ENCODE measurements at regions of chr16 and their contacts with region 1.

Region 1: GRCh38 chr16:58459344-58460218 is 40.4 kb upstream of the NDRG4 start:
- DNase-seq: peak; percentile 93
- H3K4me3 ChIP-seq: no peak overlapping the region
- H3K27ac ChIP-seq: no peak overlapping the region
- H3K4me1 ChIP-seq: peaks cover 15% of the 10 kb centered on the region
- H3K27me3 ChIP-seq: peaks cover 8% of the 10 kb centered on the region
- CTCF ChIP-seq: no peak

Region 2: DNA sequence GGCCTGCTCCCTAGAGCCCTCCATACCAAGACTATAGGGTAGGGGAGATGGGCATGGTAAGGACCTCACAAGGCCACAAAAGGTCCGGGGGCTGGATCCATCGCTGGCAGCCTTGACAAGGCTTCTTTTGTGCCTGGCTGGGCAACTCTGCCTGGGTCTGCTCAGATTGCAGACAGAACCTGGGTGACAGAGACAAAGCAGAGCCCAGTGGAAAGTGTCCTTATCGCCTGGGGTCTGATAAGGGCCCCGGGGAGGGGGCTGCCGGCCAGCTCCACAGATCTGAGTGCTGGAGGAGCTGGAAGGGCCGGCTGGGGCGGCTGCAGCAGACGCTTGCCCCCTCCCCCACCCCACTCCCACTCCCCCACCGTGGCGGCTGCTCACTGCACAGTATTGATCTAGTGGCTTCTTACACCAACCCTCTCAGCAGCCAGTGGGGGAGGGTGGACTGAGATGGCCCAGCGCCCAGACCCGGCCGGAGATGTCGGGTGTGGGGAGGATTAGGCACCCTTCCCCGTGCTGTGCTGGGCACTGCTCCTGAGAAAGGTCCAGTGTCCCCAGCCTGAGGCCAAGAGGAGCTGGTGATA is 426.8 kb before region 1 on chr16:
- CTCF ChIA-PET with region 1: no interaction called
- dilution Hi-C with region 1: loop called (anchors 10 kb)
- in situ Hi-C with region 1: no loop called
- intact Hi-C with region 1: no loop called
- DNase-seq: no peak
- H3K4me3 ChIP-seq: no peak overlapping the region
- H3K27ac ChIP-seq: no peak overlapping the region
- H3K4me1 ChIP-seq: no peaks in the 10 kb centered on the region
- H3K27me3 ChIP-seq: no peaks in the 10 kb centered on the region
- CTCF ChIP-seq: no peak

Region 3: GRCh38 chr16:58160855-58161254 is 298.7 kb before region 1 on chr16:
- CTCF ChIA-PET with region 1: no interaction called
- dilution Hi-C with region 1: loop called (anchors 10 kb)
- in situ Hi-C with region 1: no loop called
- intact Hi-C with region 1: no loop called
- DNase-seq: no peak
- H3K4me3 ChIP-seq: no peak overlapping the region
- H3K27ac ChIP-seq: no peak overlapping the region
- H3K4me1 ChIP-seq: no peaks in the 10 kb centered on the region
- H3K27me3 ChIP-seq: no peaks in the 10 kb centered on the region
- CTCF ChIP-seq: no peak

Region 4: GRCh38 chr16:58352690-58353089 is 106.9 kb before region 1 on chr16:
- CTCF ChIA-PET with region 1: no interaction called
- dilution Hi-C with region 1: loop called (anchors 5 kb)
- in situ Hi-C with region 1: no loop called
- intact Hi-C with region 1: no loop called
- DNase-seq: no peak
- H3K4me3 ChIP-seq: no peak overlapping the region
- H3K27ac ChIP-seq: no peak overlapping the region
- H3K4me1 ChIP-seq: no peaks in the 10 kb centered on the region
- H3K27me3 ChIP-seq: no peaks in the 10 kb centered on the region
- CTCF ChIP-seq: no peak

Region 5: GRCh38 chr16:58392215-58393137 is 67.1 kb before region 1 on chr16 and contains the start of gene GINS3:
- CTCF ChIA-PET with region 1: no interaction called
- dilution Hi-C with region 1: no loop called
- in situ Hi-C with region 1: no loop called
- intact Hi-C with region 1: loop called (anchors 5 kb)
- DNase-seq: peak; percentile 87
- H3K4me3 ChIP-seq: peak within 1 kb of the TSS; percentile 82 to 87 (median 87)
- H3K27ac ChIP-seq: peak within 1 kb of the TSS; percentile 94
- H3K4me1 ChIP-seq: peaks cover 3% of the 10 kb centered on the region
- H3K27me3 ChIP-seq: no peaks in the 10 kb centered on the region
- CTCF ChIP-seq: peak in 1 of 2 donors; percentile 14
- total RNA-seq, gene GINS3: 3.3 to 15.1 TPM

Region 6: GRCh38 chr16:58733671-58734458 is 274.3 kb after region 1 on chr16 and contains the start of gene GOT2:
- CTCF ChIA-PET with region 1: no interaction called
- dilution Hi-C with region 1: no loop called
- in situ Hi-C with region 1: no loop called
- intact Hi-C with region 1: no loop called
- DNase-seq: peak; percentile 90
- H3K4me3 ChIP-seq: peak within 1 kb of the TSS; percentile 79 to 94 (median 89)
- H3K27ac ChIP-seq: peak within 1 kb of the TSS; percentile 62
- H3K4me1 ChIP-seq: peaks cover 24% of the 10 kb centered on the region
- H3K27me3 ChIP-seq: no peaks in the 10 kb centered on the region
- CTCF ChIP-seq: peak; percentile 83 to 96
- total RNA-seq, gene GOT2: 74.7 to 160 TPM